Upper lobe of right lung (tissue), 1 donor: ENCODE measurements at regions of chr3 and their contacts with region 1.

Region 1: GRCh38 chr3:16286161-16286560 is 21.1 kb downstream of the OXNAD1 start:
- DNase-seq: no peak
- ATAC-seq: peak; percentile 32
- H3K4me3 ChIP-seq: peak overlapping the region; percentile 25
- H3K27ac ChIP-seq: peak overlapping the region; percentile 52
- H3K4me1 ChIP-seq: peaks cover 5% of the 10 kb centered on the region
- H3K27me3 ChIP-seq: no peaks in the 10 kb centered on the region
- CTCF ChIP-seq: no peak

Region 2: DNA sequence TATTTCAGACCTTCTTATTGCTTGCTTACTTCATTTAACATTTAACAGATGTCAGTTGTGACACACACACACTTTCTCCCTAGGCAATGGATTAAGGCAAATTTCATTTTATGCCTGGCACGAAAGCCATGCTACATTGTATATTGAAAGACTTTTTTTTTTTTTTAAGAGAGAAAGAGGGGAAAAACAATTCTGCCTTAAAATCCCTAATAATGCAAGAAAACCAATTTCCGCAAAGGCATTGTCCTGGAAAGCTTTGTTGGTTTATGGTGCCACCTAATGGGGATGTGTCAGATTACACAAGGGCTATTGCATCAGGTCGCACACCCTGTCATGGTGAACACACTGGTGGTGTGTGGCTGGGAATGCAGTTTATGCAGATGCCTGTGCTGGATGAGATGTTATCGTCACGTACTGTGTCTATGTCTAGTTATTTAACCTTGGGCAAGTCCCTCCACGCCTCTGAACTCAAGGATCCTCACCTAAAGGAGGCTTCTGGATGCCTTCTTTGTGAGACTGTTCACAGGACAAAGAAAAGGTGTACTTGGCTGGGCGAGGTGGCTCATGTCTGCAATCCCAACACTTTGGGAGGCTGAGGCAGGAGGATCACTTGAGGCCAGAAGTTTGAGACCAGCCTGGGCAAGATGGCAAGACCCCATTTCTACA is 264.6 kb after region 1 on chr3:
- intact Hi-C with region 1: loop called (anchors 5 kb)
- DNase-seq: no peak
- ATAC-seq: peak; percentile 99
- H3K4me3 ChIP-seq: no peak overlapping the region
- H3K27ac ChIP-seq: peak overlapping the region; percentile 24
- H3K4me1 ChIP-seq: peaks cover 6% of the 10 kb centered on the region
- H3K27me3 ChIP-seq: no peaks in the 10 kb centered on the region
- CTCF ChIP-seq: peak; percentile 89